AG04450 (cell line): ENCODE measurements at regions of chr5 and their contacts with region 1.

Region 1: DNA sequence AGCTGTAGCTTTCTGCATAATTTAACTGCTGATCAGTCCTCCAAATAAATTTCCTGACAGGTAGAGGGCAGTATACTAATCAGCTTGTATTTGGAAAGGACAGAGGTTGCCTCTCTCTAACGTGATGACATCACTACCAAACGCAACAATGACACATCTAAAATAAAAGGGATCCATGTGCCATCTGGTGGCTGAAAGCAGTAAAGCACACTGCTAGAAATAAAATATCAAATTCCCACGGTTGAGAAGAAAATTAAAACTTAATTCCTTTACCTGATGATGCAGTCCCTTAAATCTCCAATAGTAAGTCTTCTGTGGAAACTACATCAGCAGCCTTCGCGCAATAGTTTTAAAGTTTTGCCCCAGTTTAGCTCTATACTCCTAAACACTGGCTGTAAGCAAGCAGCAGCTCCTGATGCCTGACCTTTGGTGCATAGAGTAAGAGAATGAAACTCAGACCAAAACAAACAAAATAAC is 54.5 kb downstream of the DIAPH1 start:
- DNase-seq: peak; percentile 90
- H3K4me3 ChIP-seq: no peak overlapping the region
- H3K27ac ChIP-seq: peak overlapping the region; percentile 23
- H3K27me3 ChIP-seq: no peaks in the 10 kb centered on the region
- CTCF ChIP-seq: peak; percentile 78

Region 2: GRCh38 chr5:140926443-140927227 is 637.6 kb before region 1 on chr5:
- CTCF ChIA-PET with region 1: no interaction called
- POLR2A ChIA-PET with region 1: no interaction called
- DNase-seq: no peak
- H3K4me3 ChIP-seq: peak overlapping the region; percentile 18
- H3K27ac ChIP-seq: no peak overlapping the region
- H3K27me3 ChIP-seq: no peaks in the 10 kb centered on the region
- CTCF ChIP-seq: no peak

Region 3: DNA sequence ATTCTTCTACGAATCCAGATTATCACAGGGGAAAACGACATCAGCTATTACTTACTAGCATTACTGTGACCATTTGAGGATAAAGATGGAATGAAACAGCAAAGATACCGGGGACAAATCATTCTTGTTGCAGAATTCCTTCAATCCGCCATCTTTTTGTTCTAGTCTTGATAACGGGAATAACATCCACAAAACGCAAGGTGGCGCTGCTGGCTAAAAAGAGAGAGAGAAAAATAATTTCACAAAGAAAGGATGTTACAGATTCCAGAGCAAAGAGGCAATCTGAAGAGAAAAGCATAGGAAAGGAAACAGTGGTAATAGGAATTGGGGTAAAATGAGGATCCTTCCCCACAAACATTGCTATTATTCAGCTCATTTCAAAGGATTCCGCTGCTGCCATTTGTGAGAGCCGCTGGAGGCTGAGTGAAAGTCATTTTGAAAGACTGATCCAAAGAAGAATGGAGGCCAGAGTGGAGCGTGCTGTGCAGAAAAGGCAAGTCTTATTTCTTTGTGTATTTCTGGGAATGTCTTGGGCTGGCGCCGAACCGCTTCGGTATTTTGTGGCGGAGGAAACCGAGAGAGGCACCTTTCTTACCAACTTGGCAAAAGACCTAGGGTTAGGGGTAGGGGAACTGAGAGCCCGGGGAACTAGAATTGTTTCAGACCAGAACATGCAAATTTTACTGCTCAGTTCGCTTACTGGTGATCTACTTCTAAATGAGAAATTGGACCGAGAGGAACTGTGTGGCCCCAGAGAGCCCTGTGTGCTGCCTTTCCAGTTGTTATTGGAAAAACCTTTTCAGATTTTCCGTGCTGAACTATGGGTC is 391.7 kb before region 1 on chr5 and contains the start of gene PCDHB7:
- CTCF ChIA-PET with region 1: interaction called, 13 read pairs
- POLR2A ChIA-PET with region 1: no interaction called
- DNase-seq: no peak
- H3K4me3 ChIP-seq: no peak within 1 kb of the TSS; the same call in 1 of the 2 replicates
- H3K27ac ChIP-seq: no peak within 1 kb of the TSS
- H3K27me3 ChIP-seq: no peaks in the 10 kb centered on the region
- CTCF ChIP-seq: peak; percentile 37; the same call in 1 of the 2 replicates
- polyA plus RNA-seq, gene PCDHB7: 0.61 and 0.62 TPM in 2 replicates

Region 4: DNA sequence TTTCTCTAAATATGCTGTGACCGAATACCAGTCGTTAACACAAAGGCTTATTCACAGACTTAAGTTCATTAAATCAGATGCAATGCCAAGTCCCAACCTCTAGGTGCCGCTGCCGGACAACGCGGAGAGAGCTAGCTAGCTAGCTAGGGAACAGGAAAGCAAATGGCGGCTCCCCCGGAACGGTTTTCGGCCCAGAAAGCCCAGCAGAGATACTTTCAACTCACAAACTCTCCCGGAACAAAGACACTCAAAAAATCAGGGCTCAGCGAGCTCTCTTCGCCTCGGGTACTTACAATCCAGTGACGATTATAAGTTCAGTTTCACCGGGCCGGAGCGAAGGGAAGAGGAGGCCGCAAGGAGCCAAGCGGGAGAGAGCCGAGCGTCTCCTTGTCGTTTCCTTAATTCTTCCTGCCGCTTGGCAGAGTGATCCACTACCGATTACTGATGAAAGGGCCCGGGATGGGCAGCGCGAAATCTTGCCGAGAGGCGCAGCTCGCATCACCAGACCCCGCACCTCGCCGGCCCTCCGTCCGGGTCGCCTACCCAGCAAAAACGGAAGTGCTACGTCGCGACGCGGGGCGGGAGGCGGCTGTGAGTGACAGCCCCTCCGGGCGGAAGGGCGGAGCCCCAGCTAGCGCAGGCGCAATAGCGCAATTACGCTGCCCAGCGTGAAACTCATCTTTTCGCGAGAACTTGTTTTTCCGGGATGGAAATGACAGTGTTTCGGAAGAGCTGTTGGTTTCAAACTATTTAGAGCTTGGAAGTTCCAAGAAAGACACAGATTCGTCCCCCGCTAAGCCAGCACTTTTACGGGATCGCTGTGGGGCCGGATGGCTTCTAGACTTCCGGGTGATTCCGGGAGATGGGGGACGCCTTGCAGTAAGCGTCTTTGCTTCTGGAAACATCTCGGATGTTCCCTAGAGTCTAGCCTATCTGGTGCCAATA is 243.8 kb before region 1 on chr5 and contains the start of gene TAF7:
- CTCF ChIA-PET with region 1: interaction called, 133 read pairs
- POLR2A ChIA-PET with region 1: interaction called, 8 read pairs
- DNase-seq: peak; percentile 84
- H3K4me3 ChIP-seq: peak within 1 kb of the TSS; percentile 84
- H3K27ac ChIP-seq: peak within 1 kb of the TSS; percentile 99
- H3K27me3 ChIP-seq: no peaks in the 10 kb centered on the region
- CTCF ChIP-seq: peak; percentile 88
- polyA plus RNA-seq, gene TAF7: 60.3 and 71.0 TPM in 2 replicates

Region 5: GRCh38 chr5:141369994-141370848 is 194.0 kb before region 1 on chr5 and contains the start of gene PCDHGB3:
- CTCF ChIA-PET with region 1: interaction called, 105 read pairs
- POLR2A ChIA-PET with region 1: interaction called, 4 read pairs
- DNase-seq: no peak
- H3K4me3 ChIP-seq: peak within 1 kb of the TSS; percentile 47
- H3K27ac ChIP-seq: no peak within 1 kb of the TSS
- H3K27me3 ChIP-seq: peaks cover 16% of the 10 kb centered on the region
- CTCF ChIP-seq: peak; percentile 48
- polyA plus RNA-seq, gene PCDHGB3: 3.6 and 4.3 TPM in 2 replicates

Region 6: GRCh38 chr5:141420855-141421496 is 143.3 kb before region 1 on chr5 and contains the start of gene PCDHGA11:
- CTCF ChIA-PET with region 1: interaction called, 107 read pairs
- POLR2A ChIA-PET with region 1: no interaction called
- DNase-seq: no peak
- H3K4me3 ChIP-seq: peak within 1 kb of the TSS; percentile 50
- H3K27ac ChIP-seq: peak within 1 kb of the TSS; percentile 39
- H3K27me3 ChIP-seq: no peaks in the 10 kb centered on the region
- CTCF ChIP-seq: peak; percentile 54
- polyA plus RNA-seq, gene PCDHGA11: 7.5 and 7.7 TPM in 2 replicates

Region 7: DNA sequence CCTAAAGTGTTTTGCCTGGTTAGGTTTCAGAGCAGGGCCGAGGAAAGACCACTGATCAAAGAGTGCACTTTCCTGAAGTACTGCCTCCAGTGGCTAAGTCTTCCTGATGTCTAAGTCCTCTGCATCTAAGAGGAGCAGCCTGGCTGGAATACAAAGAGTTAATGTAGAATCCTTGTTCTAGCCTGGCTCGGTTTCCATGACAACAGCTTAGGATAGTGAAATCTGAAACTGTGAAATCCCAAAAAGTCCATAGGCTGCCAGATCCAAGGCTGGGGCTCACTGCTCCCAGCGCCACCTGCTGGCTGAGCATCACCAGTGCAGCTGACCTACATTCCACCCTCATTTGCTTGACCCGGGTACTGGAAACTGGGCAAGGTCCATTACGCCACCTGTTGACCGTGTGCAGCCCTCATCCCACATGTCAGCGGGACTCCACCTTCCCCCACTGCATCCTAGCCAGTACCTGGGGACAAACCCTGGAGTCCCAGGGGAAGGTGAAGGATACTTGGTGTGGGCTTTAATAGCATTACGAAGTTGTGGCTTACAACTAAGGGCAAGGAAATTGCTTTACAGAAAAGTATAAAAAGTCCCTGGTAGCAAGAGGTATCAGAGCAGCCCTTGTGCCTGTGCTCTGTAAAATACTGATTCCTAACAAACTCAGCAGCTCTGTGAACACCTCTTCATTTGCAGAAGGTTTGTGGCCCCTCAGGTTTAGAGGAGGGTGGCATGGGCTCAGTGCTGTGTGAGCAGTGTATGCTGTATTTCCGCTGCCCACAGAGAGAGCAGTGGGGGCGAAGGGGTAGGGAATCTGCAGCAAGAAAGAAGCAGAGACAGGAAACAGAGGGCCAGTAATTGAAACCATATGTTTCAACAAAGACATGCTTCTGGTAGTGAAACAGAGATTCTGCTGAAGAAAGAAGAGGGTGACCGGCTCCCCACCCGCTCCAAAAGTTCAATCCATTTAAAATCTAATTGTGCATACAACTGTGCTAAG is 39.4 kb before region 1 on chr5:
- CTCF ChIA-PET with region 1: interaction called, 95 read pairs
- POLR2A ChIA-PET with region 1: interaction called, 3 read pairs
- DNase-seq: peak; percentile 95
- H3K4me3 ChIP-seq: peak overlapping the region; percentile 29
- H3K27ac ChIP-seq: peak overlapping the region; percentile 95
- H3K27me3 ChIP-seq: no peaks in the 10 kb centered on the region
- CTCF ChIP-seq: peak; percentile 99

Region 8: GRCh38 chr5:141664732-141665461 is 100.6 kb after region 1 on chr5:
- CTCF ChIA-PET with region 1: no interaction called
- POLR2A ChIA-PET with region 1: no interaction called
- DNase-seq: no peak
- H3K4me3 ChIP-seq: no peak overlapping the region
- H3K27ac ChIP-seq: no peak overlapping the region
- H3K27me3 ChIP-seq: no peaks in the 10 kb centered on the region
- CTCF ChIP-seq: peak; percentile 93

Region 9: GRCh38 chr5:141849375-141850243 is 285.4 kb after region 1 on chr5:
- CTCF ChIA-PET with region 1: no interaction called
- POLR2A ChIA-PET with region 1: no interaction called
- DNase-seq: no peak
- H3K4me3 ChIP-seq: peak overlapping the region; percentile 78
- H3K27ac ChIP-seq: peak overlapping the region; percentile 86
- H3K27me3 ChIP-seq: peaks cover 3% of the 10 kb centered on the region
- CTCF ChIP-seq: no peak